Activated naive CD4-positive, alpha-beta T cell treated with anti-CD3 and anti-CD28 coated beads for 36 hours (primary cell): ENCODE measurements at regions of chr20 and their contacts with region 1.

Region 1: GRCh38 chr20:21548390-21549035 is 34.6 kb upstream of the NKX2-2 start:
- DNase-seq: peak; percentile 80
- H3K4me3 Mint-ChIP-seq: peak overlapping the region; percentile 36
- H3K27ac Mint-ChIP-seq: peak overlapping the region; percentile 76
- H3K4me1 Mint-ChIP-seq: peaks cover 42% of the 10 kb centered on the region
- H3K27me3 Mint-ChIP-seq: no peaks in the 10 kb centered on the region

Region 2: DNA sequence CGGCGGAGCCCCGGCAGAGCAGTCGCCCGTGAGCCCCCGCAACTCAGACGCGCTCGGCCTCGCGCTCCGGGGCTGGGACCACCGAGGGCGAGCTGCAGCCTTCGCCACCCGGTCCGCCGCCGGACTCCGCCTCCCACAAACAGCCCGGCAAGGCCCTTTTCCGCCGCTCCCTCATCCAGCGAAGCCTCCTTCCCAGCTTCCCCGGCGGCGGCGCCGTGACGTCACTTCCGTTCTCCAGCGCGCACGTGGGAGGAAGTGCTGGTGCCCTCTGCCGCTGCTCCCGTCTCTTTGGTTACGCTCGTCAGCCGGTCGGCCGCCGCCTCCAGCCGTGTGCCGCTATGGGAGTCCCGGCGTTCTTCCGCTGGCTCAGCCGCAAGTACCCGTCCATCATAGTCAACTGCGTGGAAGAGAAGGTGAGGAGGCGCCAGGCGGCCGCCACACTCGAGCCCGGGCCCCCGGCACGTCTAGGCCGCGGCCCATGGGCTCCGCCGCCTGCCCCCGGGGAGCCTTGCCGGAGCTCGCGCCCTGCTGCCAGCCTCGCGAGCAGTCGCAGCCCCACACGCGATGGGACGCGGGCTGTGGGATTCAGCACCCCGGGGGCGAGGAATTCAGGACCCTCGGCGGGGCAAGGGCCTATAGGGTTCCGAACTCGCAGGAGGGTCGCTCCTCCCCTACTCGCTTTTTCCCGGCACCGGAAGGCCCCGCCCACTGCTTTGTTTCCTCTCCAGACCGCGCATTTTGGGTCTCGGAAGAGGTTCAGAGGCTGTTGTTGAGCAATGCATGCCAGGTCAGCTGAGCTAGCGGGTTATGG is 245.2 kb before region 1 on chr20 and contains the start of gene XRN2:
- CTCF ChIA-PET with region 1: no interaction called
- intact Hi-C with region 1: loop called (anchors 1 kb)
- DNase-seq: peak; percentile 96
- H3K4me3 Mint-ChIP-seq: peak within 1 kb of the TSS; percentile 94
- H3K27ac Mint-ChIP-seq: peak within 1 kb of the TSS; percentile 96
- H3K4me1 Mint-ChIP-seq: peaks cover 29% of the 10 kb centered on the region
- H3K27me3 Mint-ChIP-seq: no peaks in the 10 kb centered on the region
- total RNA-seq, gene XRN2: 76.5 to 81.9 TPM

Region 3: GRCh38 chr20:21529863-21530262 is 18.6 kb before region 1 on chr20:
- CTCF ChIA-PET with region 1: interaction called, 5 read pairs
- intact Hi-C with region 1: loop called (anchors 1 kb)
- DNase-seq: no peak
- H3K4me3 Mint-ChIP-seq: no peak overlapping the region
- H3K27ac Mint-ChIP-seq: no peak overlapping the region
- H3K4me1 Mint-ChIP-seq: peaks cover 3% of the 10 kb centered on the region
- H3K27me3 Mint-ChIP-seq: peaks cover 19% of the 10 kb centered on the region

Region 4: DNA sequence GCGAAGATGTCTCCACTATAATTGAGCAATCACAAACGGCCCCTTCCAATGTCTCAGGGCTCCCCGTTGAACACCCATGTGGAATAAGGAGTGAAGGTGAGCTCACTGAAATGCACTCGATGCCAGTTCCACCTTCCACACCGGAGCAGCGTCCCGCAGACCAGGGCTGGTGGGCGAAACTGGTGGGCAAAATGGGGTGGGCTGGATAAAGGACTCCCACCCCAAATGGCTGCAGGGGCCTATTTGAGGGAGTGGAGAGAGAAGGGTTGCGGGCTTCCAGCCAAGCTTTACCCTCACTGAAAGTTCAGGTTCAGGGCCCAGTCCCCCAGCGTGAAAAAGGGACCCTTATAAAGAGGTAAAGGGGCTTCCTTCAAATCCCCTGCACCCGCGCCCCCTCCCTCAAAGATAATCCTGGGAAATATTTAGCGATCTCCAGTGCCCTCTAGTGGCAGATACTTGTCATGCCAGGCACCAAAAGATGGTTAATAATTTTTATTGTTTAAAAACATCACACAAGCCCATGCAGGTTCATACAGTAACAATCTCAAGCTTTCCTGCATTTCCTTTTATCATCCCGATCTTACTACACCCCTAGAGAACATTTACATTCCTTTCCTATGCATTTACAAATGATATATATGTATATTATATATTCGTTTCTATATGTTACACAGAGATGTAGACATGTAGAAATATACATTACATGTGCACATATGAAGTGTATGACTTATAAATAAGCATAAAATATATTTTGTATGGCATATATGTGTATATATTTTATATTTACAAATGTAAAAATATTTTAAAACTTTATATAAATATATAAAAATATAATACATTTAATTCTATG is 23.6 kb after region 1 on chr20:
- CTCF ChIA-PET with region 1: interaction called, 17 read pairs
- intact Hi-C with region 1: loop called (anchors 1 kb)
- DNase-seq: peak; percentile 26
- H3K4me3 Mint-ChIP-seq: no peak overlapping the region
- H3K27ac Mint-ChIP-seq: no peak overlapping the region
- H3K4me1 Mint-ChIP-seq: peaks cover 7% of the 10 kb centered on the region
- H3K27me3 Mint-ChIP-seq: peaks cover 7% of the 10 kb centered on the region

Region 5: GRCh38 chr20:22070610-22071058 is 522.1 kb after region 1 on chr20:
- CTCF ChIA-PET with region 1: no interaction called
- intact Hi-C with region 1: no loop called
- DNase-seq: no peak
- H3K4me3 Mint-ChIP-seq: no peak overlapping the region
- H3K27ac Mint-ChIP-seq: no peak overlapping the region
- H3K4me1 Mint-ChIP-seq: no peaks in the 10 kb centered on the region
- H3K27me3 Mint-ChIP-seq: no peaks in the 10 kb centered on the region